GM13976 (cell line): ENCODE measurements at regions of chr2 and their contacts with region 1.

Region 1: GRCh38 chr2:101831351-101831865 is 133.9 kb downstream of the MAP4K4 start:
- DNase-seq: peak; percentile 57
- CTCF ChIP-seq: peak; percentile 58

Region 2: GRCh38 chr2:101419096-101419663 is 412.2 kb before region 1 on chr2:
- in situ Hi-C with region 1: loop called (anchors 25 kb)
- DNase-seq: peak; percentile 67
- CTCF ChIP-seq: peak; percentile 29